Right cardiac atrium (tissue), 5 donors: ENCODE measurements at regions of chr3 and their contacts with region 1.

Region 1: DNA sequence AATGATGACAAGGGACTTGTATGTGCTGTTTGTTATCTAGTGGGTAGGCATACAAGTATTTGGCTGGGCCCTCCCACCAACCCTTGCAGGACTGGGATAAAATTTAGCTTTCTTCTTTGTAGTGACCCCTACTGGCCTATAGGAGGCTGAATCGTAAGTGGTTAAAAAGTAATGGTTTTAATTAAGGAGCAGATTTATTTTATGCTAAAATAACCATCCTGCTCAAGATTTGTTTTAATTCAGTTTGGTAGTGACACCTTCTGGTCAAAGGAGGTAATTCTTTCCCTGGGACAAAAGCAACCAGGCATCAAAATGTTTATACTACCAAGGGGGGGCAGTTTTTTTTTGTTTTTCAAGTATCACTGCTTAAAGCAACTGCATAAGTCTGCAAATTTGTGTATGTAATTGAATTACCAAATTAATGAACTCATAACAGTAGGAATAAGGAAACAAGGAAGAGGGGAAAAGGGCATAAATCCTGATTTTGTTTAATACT is 70.7 kb downstream of the TOP2B start:
- DNase-seq: peak in 2 of 3 donors; percentile 35 to 70
- ATAC-seq: peak; percentile 72 to 82
- H3K4me3 ChIP-seq: no peak overlapping the region
- H3K27ac ChIP-seq: no peak overlapping the region
- H3K4me1 ChIP-seq: peaks cover 16% of the 10 kb centered on the region
- H3K27me3 ChIP-seq: no peaks in the 10 kb centered on the region

Region 2: DNA sequence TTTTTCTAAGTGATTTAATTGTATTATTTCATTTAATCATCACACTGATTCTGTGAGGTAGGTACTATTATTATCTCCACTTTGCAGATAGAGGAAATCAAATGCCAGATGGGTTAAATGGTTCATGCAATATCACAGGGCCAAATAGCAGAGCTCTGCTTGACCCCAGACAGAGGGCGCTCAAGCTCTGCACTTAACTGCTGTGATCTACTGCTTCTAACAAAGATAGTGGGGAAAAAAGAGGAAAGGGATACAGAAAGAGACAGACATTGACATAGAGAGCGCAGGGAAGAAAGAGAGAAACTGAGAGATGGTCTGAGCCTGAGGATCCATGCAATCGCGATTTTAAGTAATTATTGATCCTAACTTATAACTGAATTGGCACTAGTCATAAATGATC is 820.3 kb before region 1 on chr3:
- intact Hi-C with region 1: loop called in 2 of 4 experiments (anchors 5 to 10 kb)
- DNase-seq: peak in 2 of 3 donors; percentile 46 to 72
- ATAC-seq: peak; percentile 59 to 81
- H3K4me3 ChIP-seq: no peak overlapping the region
- H3K27ac ChIP-seq: no peak overlapping the region
- H3K4me1 ChIP-seq: no peaks in the 10 kb centered on the region
- H3K27me3 ChIP-seq: no peaks in the 10 kb centered on the region

Region 3: GRCh38 chr3:24802614-24803013 is 791.4 kb before region 1 on chr3:
- intact Hi-C with region 1: no loop called
- DNase-seq: no peak
- ATAC-seq: no peak
- H3K4me3 ChIP-seq: no peak overlapping the region
- H3K27ac ChIP-seq: no peak overlapping the region
- H3K4me1 ChIP-seq: no peaks in the 10 kb centered on the region
- H3K27me3 ChIP-seq: no peaks in the 10 kb centered on the region

Region 4: GRCh38 chr3:25021816-25022215 is 572.2 kb before region 1 on chr3:
- intact Hi-C with region 1: loop called in 1 of 4 experiments (anchors 10 kb)
- DNase-seq: no peak
- ATAC-seq: peak; percentile 51 to 61
- H3K4me3 ChIP-seq: no peak overlapping the region
- H3K27ac ChIP-seq: no peak overlapping the region
- H3K4me1 ChIP-seq: no peaks in the 10 kb centered on the region
- H3K27me3 ChIP-seq: no peaks in the 10 kb centered on the region

Region 5: DNA sequence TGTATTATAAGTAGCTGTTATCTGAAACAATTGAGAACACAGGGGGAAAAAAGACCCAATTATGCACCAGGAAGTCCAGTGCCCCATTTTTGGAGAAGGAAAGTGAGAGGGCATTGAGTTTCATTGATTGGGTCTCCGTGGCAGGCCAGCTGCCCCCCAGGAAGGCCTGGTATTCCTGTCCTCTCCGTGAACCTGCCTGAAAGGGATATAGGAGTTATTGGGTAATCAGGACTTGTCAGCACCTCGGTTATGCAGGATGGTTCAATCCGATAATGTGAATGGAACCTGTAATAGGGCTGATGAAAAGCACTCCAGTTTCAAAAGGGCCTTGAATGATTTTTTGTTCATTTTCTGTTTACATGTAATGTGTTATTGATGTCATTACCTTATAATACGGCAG is 288.0 kb before region 1 on chr3:
- intact Hi-C with region 1: loop called in 1 of 4 experiments (anchors 10 kb)
- DNase-seq: no peak
- ATAC-seq: no peak
- H3K4me3 ChIP-seq: no peak overlapping the region
- H3K27ac ChIP-seq: no peak overlapping the region
- H3K4me1 ChIP-seq: no peaks in the 10 kb centered on the region
- H3K27me3 ChIP-seq: no peaks in the 10 kb centered on the region

Region 6: DNA sequence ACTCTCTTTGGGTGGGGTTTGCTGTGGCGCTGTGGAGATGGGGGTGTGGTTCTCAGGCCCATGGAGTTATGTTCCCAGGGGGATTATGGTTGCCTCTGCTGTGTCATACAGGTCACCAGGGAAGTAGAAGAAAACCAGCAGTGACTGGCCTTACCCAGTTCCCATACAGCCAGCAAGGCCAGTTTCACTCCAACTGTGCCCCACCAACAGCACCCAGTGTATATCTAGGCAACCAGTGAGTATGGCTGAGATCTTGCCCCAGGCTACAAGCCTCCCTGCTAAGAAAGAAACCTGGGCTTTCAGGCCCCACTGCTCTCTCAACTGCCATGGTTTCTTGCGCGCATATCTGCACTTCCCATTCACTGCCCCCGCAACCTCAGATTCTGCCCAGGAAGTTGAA is 197.4 kb before region 1 on chr3:
- intact Hi-C with region 1: no loop called
- DNase-seq: no peak
- ATAC-seq: no peak
- H3K4me3 ChIP-seq: no peak overlapping the region
- H3K27ac ChIP-seq: no peak overlapping the region
- H3K4me1 ChIP-seq: no peaks in the 10 kb centered on the region
- H3K27me3 ChIP-seq: no peaks in the 10 kb centered on the region

Region 7: GRCh38 chr3:25433868-25434267 is 160.2 kb before region 1 on chr3:
- intact Hi-C with region 1: loop called (anchors 5 to 10 kb)
- DNase-seq: peak; percentile 60 to 77 (median 70)
- ATAC-seq: peak; percentile 77 to 96
- H3K4me3 ChIP-seq: peak overlapping the region; percentile 22
- H3K27ac ChIP-seq: peak overlapping the region; percentile 72
- H3K4me1 ChIP-seq: peaks cover 3% of the 10 kb centered on the region
- H3K27me3 ChIP-seq: no peaks in the 10 kb centered on the region